Gastrocnemius medialis (tissue), 4 donors: ENCODE measurements at regions of chr7 and their contacts with region 1.

Region 1: GRCh38 chr7:35906191-35906908 is 105.5 kb downstream of the SEPTIN7 start:
- DNase-seq: peak; percentile 30 to 44
- ATAC-seq: peak; percentile 90 to 95
- H3K4me3 ChIP-seq: no peak overlapping the region
- H3K27ac ChIP-seq: no peak overlapping the region
- H3K4me1 ChIP-seq: peaks cover 0 to 4% of the 10 kb centered on the region in 2 donors
- H3K27me3 ChIP-seq: no peaks in the 10 kb centered on the region
- CTCF ChIP-seq: peak; percentile 88 to 96 (median 94)
- POLR2A ChIP-seq: no peak

Region 2: DNA sequence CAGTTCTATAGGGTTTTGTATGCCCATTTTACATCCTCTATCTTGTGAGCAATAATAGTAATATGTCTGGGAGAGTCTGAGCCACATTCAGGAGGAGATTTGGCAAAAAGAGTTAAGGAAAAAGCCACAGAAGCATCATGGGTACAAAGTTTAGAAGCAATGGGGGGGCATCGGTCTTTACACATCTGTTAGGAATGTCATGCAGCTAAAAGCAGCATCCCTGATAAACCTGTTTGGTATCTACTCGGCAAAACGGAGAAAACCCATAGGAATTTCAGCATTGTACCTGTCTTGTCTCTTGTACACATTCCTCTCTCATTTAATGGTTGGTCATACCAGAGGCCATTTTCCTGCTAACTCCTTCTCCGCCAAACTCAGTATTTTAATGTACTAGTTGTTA is 198.9 kb before region 1 on chr7:
- in situ Hi-C with region 1: loop called (anchors 5 kb)
- intact Hi-C with region 1: loop called (anchors 1 kb)
- DNase-seq: no peak
- ATAC-seq: no peak
- H3K4me3 ChIP-seq: no peak overlapping the region
- H3K27ac ChIP-seq: no peak overlapping the region
- H3K4me1 ChIP-seq: no peaks in the 10 kb centered on the region
- H3K27me3 ChIP-seq: no peaks in the 10 kb centered on the region
- CTCF ChIP-seq: no peak
- POLR2A ChIP-seq: no peak

Region 3: DNA sequence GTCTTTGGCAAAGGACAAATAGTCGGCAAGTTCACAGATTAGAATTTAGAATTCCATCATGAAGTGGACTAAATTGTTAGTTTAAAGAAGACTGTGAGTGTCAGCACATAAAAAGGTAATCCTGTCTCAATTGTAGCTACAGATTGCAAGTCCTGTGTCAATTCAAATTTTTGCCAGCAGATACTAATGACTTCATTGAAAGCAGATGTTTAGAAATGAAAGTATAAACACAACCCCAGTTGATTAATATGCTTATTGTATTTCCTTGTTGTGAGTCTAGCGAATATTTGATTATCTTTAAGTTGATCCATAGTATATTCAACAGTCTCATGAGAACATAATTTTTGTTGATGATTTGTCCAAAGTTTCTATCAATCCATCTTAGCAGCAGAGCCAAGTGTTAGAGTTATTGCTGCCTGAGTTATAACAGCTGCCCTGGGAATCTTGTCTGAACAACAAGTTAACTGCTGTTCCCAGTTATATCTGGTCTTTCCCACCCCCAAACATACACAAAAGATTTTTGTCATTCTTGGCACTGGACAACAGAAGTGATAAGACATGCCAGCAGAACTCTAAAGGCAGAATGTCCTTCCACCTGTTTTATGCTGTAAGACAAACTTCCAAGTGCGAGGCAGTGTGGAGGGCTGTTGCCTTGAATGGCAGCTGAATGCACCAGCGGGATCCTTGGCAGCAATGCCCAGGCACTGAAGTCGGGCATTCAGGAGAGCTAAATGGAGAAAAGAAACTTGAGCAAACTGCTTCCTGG is 190.1 kb before region 1 on chr7:
- in situ Hi-C with region 1: loop called (anchors 5 kb)
- intact Hi-C with region 1: no loop called
- DNase-seq: peak; percentile 31 to 57
- ATAC-seq: peak; percentile 82 to 90
- H3K4me3 ChIP-seq: peak overlapping the region; percentile 28 to 35 (median 30)
- H3K27ac ChIP-seq: peak overlapping the region; percentile 48 to 75 (median 70)
- H3K4me1 ChIP-seq: peaks cover 19 to 47% of the 10 kb centered on the region in 2 donors
- H3K27me3 ChIP-seq: no peaks in the 10 kb centered on the region
- CTCF ChIP-seq: no peak
- POLR2A ChIP-seq: no peak

Region 4: GRCh38 chr7:35975851-35976454 is 69.6 kb after region 1 on chr7:
- in situ Hi-C with region 1: loop called in 2 of 4 experiments (anchors 10 kb)
- intact Hi-C with region 1: no loop called
- DNase-seq: no peak
- ATAC-seq: peak; percentile 62 to 86
- H3K4me3 ChIP-seq: no peak overlapping the region
- H3K27ac ChIP-seq: no peak overlapping the region
- H3K4me1 ChIP-seq: no peaks in the 10 kb centered on the region
- H3K27me3 ChIP-seq: peaks cover 0 to 7% (median 0%) of the 10 kb centered on the region in 3 donors
- CTCF ChIP-seq: peak; percentile 63 to 91 (median 78)
- POLR2A ChIP-seq: no peak

Region 5: GRCh38 chr7:36303202-36304098 is 397.1 kb after region 1 on chr7:
- in situ Hi-C with region 1: no loop called
- intact Hi-C with region 1: loop called (anchors 10 kb)
- DNase-seq: peak; percentile 77 to 91
- ATAC-seq: peak; percentile 83 to 86
- H3K4me3 ChIP-seq: no peak overlapping the region
- H3K27ac ChIP-seq: peak overlapping the region; percentile 80 to 91 (median 87)
- H3K4me1 ChIP-seq: peaks cover 48 to 50% of the 10 kb centered on the region in 2 donors
- H3K27me3 ChIP-seq: no peaks in the 10 kb centered on the region
- CTCF ChIP-seq: peak in 1 of 5 experiments; percentile 5
- POLR2A ChIP-seq: peak; percentile 24 to 51